ENCODE measurements at regions of chr1 and their contacts with region 1.

Region 1: DNA sequence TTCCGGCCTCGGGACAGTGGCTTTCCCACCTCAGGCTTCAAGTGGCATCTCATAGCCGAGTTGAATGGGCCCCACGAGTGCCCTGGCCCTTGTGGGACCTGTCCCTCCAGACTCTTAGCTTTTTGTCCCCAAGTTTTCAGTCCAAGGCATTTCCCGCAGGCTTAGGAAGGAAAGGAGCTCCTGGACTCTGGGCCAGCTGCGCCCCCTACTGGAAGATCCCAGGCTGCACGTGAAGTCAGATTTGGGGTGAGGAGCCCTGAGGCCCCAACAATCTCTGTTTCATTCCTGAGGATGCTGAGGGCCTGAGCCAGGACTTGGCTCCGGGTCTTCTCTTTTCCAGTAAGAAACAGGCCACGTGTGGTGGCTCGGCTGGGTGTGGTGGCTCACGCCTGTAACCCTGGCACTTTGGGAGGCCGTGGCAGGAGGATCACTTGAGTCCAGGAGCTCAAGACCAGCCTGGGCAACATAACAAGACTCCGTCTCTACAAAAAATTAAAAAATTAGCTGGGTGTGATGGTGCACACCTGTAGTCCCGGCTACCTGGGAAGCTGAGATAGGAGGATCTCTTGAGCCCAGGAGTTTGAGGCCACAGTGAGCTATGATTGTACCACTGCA is 67.4 kb downstream of the ARHGEF10L start:
- DNase-seq: peak; percentile 65
- H3K27ac ChIP-seq: no peak overlapping the region
- CTCF ChIP-seq: peak; percentile 88

Region 2: GRCh38 chr1:17494114-17494729 is 112.7 kb before region 1 on chr1:
- CTCF ChIA-PET with region 1: interaction called, 41 read pairs
- POLR2A ChIA-PET with region 1: interaction called, 4 read pairs
- DNase-seq: peak; percentile 87
- H3K27ac ChIP-seq: no peak overlapping the region
- CTCF ChIP-seq: peak; percentile 90

Region 3: GRCh38 chr1:17502326-17502778 is 104.6 kb before region 1 on chr1:
- CTCF ChIA-PET with region 1: interaction called, 58 read pairs
- POLR2A ChIA-PET with region 1: no interaction called
- DNase-seq: peak; percentile 66
- H3K27ac ChIP-seq: no peak overlapping the region
- CTCF ChIP-seq: peak; percentile 70

Region 4: GRCh38 chr1:17507916-17508315 is 99.0 kb before region 1 on chr1:
- CTCF ChIA-PET with region 1: interaction called, 58 read pairs
- POLR2A ChIA-PET with region 1: no interaction called
- DNase-seq: no peak
- H3K27ac ChIP-seq: no peak overlapping the region
- CTCF ChIP-seq: no peak

Region 5: GRCh38 chr1:17513131-17513530 is 93.8 kb before region 1 on chr1:
- CTCF ChIA-PET with region 1: interaction called, 12 read pairs
- POLR2A ChIA-PET with region 1: no interaction called
- DNase-seq: no peak
- H3K27ac ChIP-seq: no peak overlapping the region
- CTCF ChIP-seq: no peak